Dorsolateral prefrontal cortex (tissue), 120 donors: ENCODE measurements at regions of chr5 and their contacts with region 1.

Region 1: DNA sequence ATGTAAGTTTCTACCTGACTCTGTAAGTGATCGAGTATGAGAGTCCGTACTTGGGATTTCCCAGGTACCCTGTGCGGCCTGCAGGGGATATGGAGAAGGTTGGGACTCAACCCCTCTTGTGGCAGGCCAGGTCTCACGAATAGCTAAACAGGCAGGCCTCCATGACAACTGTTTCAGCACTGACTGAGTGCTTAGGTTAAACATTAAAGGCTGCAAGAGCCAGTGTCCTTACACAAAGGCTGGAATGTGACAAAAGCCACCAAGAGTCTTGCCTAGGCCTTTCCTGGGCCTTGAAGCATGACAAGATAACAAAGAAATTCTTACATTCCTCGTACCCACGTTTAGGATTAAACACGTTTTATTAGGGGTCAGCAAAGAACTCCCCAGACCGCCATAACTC is 58.6 kb downstream of the THBS4 start:
- DNase-seq: no peak
- H3K4me3 ChIP-seq: no peak overlapping the region
- H3K27ac ChIP-seq: peak overlapping the region in 1 of 59 donors; percentile 10
- H3K27me3 ChIP-seq: no peaks in the 10 kb centered on the region
- CTCF ChIP-seq: no peak

Region 2: DNA sequence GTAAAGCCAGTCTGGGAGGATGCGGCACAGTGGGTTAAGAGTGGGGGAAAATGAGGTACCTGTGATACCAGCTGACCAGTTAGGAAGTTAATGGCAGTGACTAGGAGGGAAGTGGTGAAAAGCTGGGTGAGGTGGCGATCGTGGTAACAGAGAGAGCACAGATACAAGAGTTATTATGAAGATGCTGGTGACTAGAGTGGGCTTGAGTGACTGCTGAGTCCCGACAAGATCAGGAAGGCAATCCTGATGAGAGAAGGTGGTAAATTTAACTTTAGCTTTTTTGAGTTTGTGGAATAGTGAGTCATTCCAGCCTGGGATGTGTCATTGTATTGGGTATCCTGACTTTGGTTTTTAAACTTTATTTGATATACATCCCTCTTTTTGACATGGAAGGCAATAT is 365.4 kb before region 1 on chr5:
- intact Hi-C with region 1: no loop called
- DNase-seq: no peak
- H3K4me3 ChIP-seq: no peak overlapping the region
- H3K27ac ChIP-seq: no peak overlapping the region
- H3K27me3 ChIP-seq: no peaks in the 10 kb centered on the region
- CTCF ChIP-seq: no peak

Region 3: GRCh38 chr5:80134879-80135278 is 41.1 kb after region 1 on chr5:
- intact Hi-C with region 1: loop called in 1 of 2 experiments (anchors 5 kb)
- DNase-seq: no peak
- H3K4me3 ChIP-seq: no peak overlapping the region
- H3K27ac ChIP-seq: peak overlapping the region in 50 of 59 donors; percentile 1 to 82 (median 52)
- H3K27me3 ChIP-seq: no peaks in the 10 kb centered on the region
- CTCF ChIP-seq: no peak

Region 4: GRCh38 chr5:80165452-80165851 is 71.7 kb after region 1 on chr5:
- intact Hi-C with region 1: no loop called
- DNase-seq: no peak
- H3K4me3 ChIP-seq: no peak overlapping the region
- H3K27ac ChIP-seq: peak overlapping the region in 2 of 59 donors; percentile 7 to 23
- H3K27me3 ChIP-seq: no peaks in the 10 kb centered on the region
- CTCF ChIP-seq: no peak

Region 5: GRCh38 chr5:80191991-80192398 is 98.2 kb after region 1 on chr5:
- intact Hi-C with region 1: loop called in 1 of 2 experiments (anchors 10 kb)
- DNase-seq: peak in 6 of 10 donors; percentile 50 to 74 (median 64)
- H3K4me3 ChIP-seq: peak overlapping the region in 28 of 59 donors; percentile 0 to 41 (median 10)
- H3K27ac ChIP-seq: peak overlapping the region; percentile 51 to 97 (median 87)
- H3K27me3 ChIP-seq: no peaks in the 10 kb centered on the region
- CTCF ChIP-seq: no peak

Region 6: DNA sequence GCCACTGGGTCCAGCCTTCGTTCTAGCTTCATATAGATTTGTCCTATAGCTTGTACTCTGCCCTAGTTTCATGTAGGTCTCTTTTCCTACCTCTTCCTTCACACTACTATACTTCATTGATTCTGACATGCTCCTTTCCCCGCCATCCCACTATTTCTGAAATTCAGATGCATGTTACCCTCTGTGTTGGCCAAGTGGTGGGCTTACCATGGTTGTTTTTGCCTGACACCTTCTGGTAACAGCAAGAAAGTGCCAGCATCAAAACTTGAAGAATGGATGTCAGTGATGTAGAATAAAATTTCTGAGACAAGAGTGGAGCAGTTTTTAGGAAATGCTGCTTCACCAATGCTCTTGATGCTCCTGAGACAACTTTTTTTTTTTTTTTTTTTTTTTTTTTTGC is 181.6 kb after region 1 on chr5:
- intact Hi-C with region 1: loop called (anchors 1 to 2 kb)
- DNase-seq: peak in 1 of 10 donors; percentile 42
- H3K4me3 ChIP-seq: no peak overlapping the region
- H3K27ac ChIP-seq: no peak overlapping the region
- H3K27me3 ChIP-seq: no peaks in the 10 kb centered on the region
- CTCF ChIP-seq: peak in 55 of 56 donors; percentile 31 to 80 (median 57)

Region 7: DNA sequence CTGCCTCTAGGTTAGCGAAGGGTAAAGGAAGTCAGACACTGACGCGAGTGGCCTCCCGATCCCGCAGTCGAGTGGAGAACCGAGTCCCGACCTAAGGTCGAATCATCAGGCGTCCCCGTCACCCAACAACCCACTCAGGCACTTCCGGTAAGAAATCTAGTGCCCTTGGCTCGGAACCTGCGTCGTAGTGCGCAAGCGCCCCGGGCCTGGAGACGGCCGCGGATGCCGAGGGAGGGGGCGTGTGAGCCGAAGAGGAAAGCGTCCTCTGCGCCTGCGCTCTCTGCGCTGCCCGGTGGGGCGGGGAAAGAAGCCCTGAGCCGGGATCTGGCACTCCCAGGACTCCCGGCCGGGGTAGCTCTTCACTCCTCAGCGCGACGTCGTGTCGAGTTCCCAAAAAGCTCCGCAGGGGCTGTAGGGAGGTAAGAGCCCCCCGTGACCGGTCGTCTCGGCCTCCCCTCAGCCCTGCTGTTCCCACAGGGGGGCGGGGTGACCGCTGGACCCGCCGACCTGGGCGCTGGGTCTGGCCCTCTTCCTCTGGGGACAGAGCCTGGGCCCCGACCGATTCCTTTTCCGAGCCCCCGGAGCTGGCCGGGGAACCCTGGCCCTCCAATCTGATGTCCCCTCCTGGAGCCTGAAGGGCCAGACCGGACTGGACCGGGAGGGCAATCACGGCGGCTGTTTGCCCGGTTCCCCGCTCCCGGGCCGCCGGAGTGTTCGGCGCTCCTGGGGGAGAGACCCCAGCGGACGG is 314.1 kb after region 1 on chr5 and contains the start of gene ZFYVE16:
- intact Hi-C with region 1: loop called in 1 of 2 experiments (anchors 5 kb)
- DNase-seq: peak; percentile 95 to 98 (median 98)
- H3K4me3 ChIP-seq: peak within 1 kb of the TSS; percentile 63 to 100 (median 92)
- H3K27ac ChIP-seq: peak within 1 kb of the TSS; percentile 88 to 100 (median 99)
- H3K27me3 ChIP-seq: no peaks in the 10 kb centered on the region
- CTCF ChIP-seq: peak in 28 of 56 donors; percentile 4 to 54 (median 31)
- total RNA-seq, gene ZFYVE16: 59.0 to 215 (median 92.5) TPM

Region 8: DNA sequence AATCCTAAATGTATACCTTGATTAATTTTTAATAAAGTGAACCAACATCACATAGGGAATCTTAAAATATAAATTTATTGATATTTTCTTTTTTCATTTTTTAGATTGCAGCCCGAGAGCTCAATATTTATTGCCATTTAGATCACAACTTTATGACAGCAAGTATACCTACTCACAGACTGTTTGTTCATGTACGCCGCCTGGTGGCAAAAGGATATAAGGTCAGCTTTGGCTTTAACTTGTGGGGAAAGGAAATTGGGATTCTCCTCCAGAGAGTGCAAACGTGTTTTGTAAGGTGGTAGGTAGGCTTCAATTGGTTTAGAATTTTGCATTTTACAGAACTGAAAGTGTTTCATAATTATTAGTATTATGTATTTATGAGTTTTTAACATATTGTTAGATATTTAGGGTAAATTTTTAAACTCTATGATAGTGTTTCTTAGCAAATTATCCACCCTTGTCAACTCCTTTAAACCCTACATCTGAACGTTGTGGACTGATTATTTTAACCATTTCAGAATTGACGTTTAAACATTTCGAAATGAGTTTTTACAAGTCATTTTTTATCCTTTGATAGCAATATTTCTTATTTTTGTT is 578.4 kb after region 1 on chr5:
- intact Hi-C with region 1: loop called in 1 of 2 experiments (anchors 5 kb)
- DNase-seq: peak in 8 of 10 donors; percentile 44 to 81 (median 61)
- H3K4me3 ChIP-seq: no peak overlapping the region
- H3K27ac ChIP-seq: no peak overlapping the region
- H3K27me3 ChIP-seq: no peaks in the 10 kb centered on the region
- CTCF ChIP-seq: peak; percentile 60 to 88 (median 78)